ENCODE measurements at regions of chr6 and their contacts with region 1.

Region 1: DNA sequence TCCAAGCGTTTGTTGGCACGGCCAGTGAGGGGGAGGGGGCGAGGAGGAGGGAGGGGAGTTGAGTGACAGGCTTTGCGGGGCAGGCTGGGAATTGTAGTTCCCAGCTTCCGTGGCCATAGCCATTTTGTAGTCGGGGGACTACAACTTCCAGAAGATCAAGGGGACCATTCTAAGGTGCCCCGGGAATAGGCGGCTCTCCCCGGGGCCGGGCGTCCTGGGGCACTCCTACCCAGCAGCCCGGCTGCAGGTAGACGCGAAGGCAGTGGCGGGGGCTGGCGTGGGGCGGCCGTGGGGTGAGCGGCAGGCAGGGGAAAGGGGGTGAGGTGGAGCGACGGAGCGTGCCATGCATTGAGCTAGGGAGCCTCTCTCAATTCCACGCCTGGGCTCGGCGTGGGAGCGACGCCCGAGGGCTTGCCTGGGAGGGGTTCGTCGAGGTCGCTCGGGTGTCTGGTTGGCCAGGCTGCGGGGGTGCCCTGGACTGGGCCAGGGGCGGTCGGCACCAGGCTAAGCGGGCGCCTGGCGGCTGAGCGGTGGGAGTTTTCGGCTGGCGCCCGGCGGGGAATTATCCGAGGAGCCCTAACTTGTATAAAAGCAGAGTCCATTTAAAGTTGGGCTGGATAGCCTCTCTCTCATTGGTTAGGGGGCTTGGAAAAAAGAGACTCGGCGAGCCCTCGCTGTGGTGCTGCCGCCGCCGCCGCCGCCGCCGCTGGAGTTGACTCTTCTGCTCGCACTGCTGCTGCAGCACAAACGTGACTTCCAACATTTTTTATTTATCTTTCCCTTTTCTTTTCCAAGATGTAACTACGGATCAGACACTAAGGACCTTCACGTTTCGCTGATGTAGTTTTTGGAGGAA is at the start of gene JARID2:
- DNase-seq: peak; percentile 88 to 96
- ATAC-seq: peak; percentile 53 to 78 (median 62)
- H3K4me3 ChIP-seq: peak within 1 kb of the TSS; percentile 85
- H3K4me3 Mint-ChIP-seq: peak within 1 kb of the TSS; percentile 100
- H3K27ac ChIP-seq: peak within 1 kb of the TSS; percentile 88
- H3K27ac Mint-ChIP-seq: peak within 1 kb of the TSS; percentile 93 to 99
- H3K4me1 ChIP-seq: peaks cover 14% of the 10 kb centered on the region
- H3K4me1 Mint-ChIP-seq: peaks cover 39 to 41% of the 10 kb centered on the region in 2 donors
- H3K27me3 ChIP-seq: no peaks in the 10 kb centered on the region
- H3K27me3 Mint-ChIP-seq: no peaks in the 10 kb centered on the region
- CTCF ChIP-seq: no peak
- total RNA-seq, gene JARID2: 49.9 to 60.9 (median 60.5) TPM

Region 2: DNA sequence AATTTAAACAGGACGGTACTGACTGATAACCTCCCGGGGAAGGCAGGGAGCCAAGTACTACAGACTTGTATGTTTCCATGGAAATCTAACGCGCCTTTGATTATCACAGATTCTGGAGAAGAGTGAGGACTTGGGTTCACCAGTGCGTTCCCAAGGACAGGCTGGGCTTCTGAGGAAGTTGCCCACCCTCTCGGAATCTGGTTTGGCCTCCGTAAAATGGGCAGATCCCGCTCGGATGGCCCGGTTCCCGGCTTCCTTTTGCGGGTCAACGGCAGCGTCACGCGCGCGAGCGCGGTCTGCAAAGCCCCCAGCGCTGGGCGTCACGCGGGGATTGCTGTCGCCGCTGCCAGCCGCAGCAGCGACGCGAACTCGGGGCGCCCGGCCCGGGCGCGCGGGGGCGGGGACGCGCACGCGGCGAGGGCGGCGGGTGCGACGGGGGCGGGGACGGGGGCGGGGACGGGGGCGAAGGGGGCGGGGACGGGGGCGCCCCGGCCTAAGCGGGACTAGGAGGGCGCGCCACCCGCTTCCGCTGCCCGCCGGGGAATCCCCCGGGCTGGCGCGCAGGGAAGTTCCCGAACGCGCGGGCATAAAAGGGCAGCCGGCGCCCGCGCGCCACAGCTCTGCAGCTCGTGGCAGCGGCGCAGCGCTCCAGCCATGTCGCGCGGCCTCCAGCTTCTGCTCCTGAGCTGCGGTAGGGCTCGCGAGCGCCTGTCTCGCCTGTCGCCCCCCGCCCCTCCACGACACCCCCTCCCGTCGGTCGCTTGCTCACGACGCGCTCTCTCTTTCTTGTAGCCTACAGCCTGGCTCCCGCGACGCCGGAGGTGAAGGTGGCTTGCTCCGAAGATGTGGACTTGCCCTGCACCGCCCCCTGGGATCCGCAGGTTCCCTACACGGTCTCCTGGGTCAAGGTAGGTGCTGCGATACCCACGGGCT is 1128.2 kb before region 1 on chr6 and contains the start of gene CD83:
- intact Hi-C with region 1: loop called (anchors 5 kb)
- DNase-seq: peak; percentile 88 to 96
- ATAC-seq: peak; percentile 92 to 98 (median 93)
- H3K4me3 ChIP-seq: peak within 1 kb of the TSS; percentile 76
- H3K4me3 Mint-ChIP-seq: peak within 1 kb of the TSS; percentile 94
- H3K27ac ChIP-seq: peak within 1 kb of the TSS; percentile 92
- H3K27ac Mint-ChIP-seq: peak within 1 kb of the TSS; percentile 92 to 98
- H3K4me1 ChIP-seq: peaks cover 18% of the 10 kb centered on the region
- H3K4me1 Mint-ChIP-seq: peaks cover 20 to 25% of the 10 kb centered on the region in 2 donors
- H3K27me3 ChIP-seq: no peaks in the 10 kb centered on the region
- H3K27me3 Mint-ChIP-seq: peaks cover under 1 to 10% of the 10 kb centered on the region in 2 donors
- CTCF ChIP-seq: no peak
- total RNA-seq, gene CD83: 54.8 to 110 (median 64.3) TPM

Region 3: GRCh38 chr6:15137086-15137485 is 108.5 kb before region 1 on chr6:
- intact Hi-C with region 1: no loop called
- DNase-seq: no peak
- ATAC-seq: no peak
- H3K4me3 ChIP-seq: no peak overlapping the region
- H3K4me3 Mint-ChIP-seq: no peak overlapping the region
- H3K27ac ChIP-seq: no peak overlapping the region
- H3K27ac Mint-ChIP-seq: no peak overlapping the region
- H3K4me1 ChIP-seq: no peaks in the 10 kb centered on the region
- H3K4me1 Mint-ChIP-seq: no peaks in the 10 kb centered on the region
- H3K27me3 ChIP-seq: no peaks in the 10 kb centered on the region
- H3K27me3 Mint-ChIP-seq: no peaks in the 10 kb centered on the region
- CTCF ChIP-seq: no peak

Region 4: DNA sequence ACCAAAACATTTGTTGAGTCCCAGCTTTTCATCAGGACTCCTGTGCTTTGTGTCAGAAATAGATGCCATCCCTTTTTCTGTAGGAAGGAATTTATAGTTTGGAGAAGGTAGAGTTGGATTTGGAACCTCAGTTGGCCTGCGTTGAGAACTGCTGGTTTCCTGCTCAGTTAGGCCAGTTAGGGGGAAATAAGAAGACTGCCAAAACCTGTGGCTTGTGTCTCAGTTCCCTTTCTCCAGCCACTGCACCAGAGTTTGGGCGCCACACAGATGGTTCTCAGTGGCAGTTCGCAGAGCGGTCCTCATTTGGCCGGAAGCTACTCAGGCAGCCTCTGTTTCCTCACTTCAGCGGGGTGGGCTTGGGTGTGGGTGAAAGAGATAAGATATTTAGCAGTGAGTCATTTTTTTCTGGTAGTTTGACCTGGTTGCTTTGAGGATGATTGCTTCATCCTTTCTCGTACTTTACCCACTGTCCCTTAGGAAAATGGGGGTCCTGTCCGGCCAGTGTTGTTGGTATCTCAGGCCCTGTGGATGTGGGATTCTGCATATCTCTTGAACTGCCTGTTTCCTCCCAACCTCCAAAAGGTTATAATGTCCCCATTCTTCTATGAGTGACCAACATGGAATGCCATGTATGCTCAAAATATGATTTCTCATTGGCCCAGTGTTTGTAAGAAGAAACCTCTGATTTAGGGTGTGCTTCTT is 54.0 kb after region 1 on chr6:
- intact Hi-C with region 1: loop called (anchors 2 kb)
- DNase-seq: peak; percentile 56 to 65
- ATAC-seq: peak; percentile 84 to 94 (median 90)
- H3K4me3 ChIP-seq: no peak overlapping the region
- H3K4me3 Mint-ChIP-seq: peak overlapping the region; percentile 71
- H3K27ac ChIP-seq: peak overlapping the region; percentile 72
- H3K27ac Mint-ChIP-seq: peak overlapping the region; percentile 93 to 94
- H3K4me1 ChIP-seq: peaks cover 65% of the 10 kb centered on the region
- H3K4me1 Mint-ChIP-seq: peaks cover 76 to 80% of the 10 kb centered on the region in 2 donors
- H3K27me3 ChIP-seq: no peaks in the 10 kb centered on the region
- H3K27me3 Mint-ChIP-seq: no peaks in the 10 kb centered on the region
- CTCF ChIP-seq: no peak

Region 5: GRCh38 chr6:15420959-15421438 is 175.4 kb after region 1 on chr6:
- intact Hi-C with region 1: loop called (anchors 5 kb)
- DNase-seq: peak in 1 of 2 donors; percentile 38
- ATAC-seq: peak; percentile 44 to 60 (median 52)
- H3K4me3 ChIP-seq: no peak overlapping the region
- H3K4me3 Mint-ChIP-seq: peak overlapping the region; percentile 61
- H3K27ac ChIP-seq: peak overlapping the region; percentile 46
- H3K27ac Mint-ChIP-seq: peak overlapping the region; percentile 87 to 93
- H3K4me1 ChIP-seq: peaks cover 34% of the 10 kb centered on the region
- H3K4me1 Mint-ChIP-seq: peaks cover 68 to 79% of the 10 kb centered on the region in 2 donors
- H3K27me3 ChIP-seq: no peaks in the 10 kb centered on the region
- H3K27me3 Mint-ChIP-seq: no peaks in the 10 kb centered on the region
- CTCF ChIP-seq: no peak

Region 6: DNA sequence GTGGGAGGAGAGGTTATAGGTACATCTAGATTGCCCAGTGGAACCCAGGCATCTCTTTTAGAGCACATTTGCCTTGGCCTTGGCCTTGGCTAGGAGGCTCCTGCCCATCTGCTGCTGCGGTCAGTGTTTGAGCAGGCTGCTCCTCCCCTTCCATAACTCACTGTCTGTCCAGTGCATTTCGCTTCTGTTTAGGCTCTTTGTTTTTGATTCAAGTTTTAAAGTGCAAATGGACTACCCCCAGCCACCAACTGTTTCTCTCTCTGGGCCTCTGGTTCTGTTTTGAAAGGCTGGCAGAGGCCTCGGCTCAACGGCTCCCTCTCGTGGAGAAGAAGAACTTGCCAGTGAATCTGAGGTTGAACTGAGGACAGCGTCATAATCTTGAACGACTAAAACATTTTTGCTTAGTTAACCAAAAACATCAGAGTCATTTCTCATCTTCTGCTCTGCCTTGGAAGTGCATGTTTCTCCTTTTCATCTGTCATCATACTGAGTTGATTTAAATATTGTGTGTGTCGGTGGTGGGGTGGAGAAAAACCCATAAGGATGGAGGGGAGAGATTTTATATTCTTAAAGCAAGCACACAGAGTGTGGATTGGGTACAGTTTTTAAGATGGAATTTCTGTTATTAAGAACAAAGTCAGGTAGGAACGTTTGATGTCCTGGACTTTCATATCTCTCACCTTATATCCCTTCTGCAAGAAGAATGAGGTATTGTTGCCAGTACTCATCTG is 245.8 kb after region 1 on chr6:
- intact Hi-C with region 1: no loop called
- DNase-seq: peak; percentile 58 to 80
- ATAC-seq: peak; percentile 83 to 94 (median 84)
- H3K4me3 ChIP-seq: no peak overlapping the region
- H3K4me3 Mint-ChIP-seq: no peak overlapping the region
- H3K27ac ChIP-seq: no peak overlapping the region
- H3K27ac Mint-ChIP-seq: peak overlapping the region; percentile 53 to 75
- H3K4me1 ChIP-seq: peaks cover 18% of the 10 kb centered on the region
- H3K4me1 Mint-ChIP-seq: peaks cover 49 to 59% of the 10 kb centered on the region in 2 donors
- H3K27me3 ChIP-seq: no peaks in the 10 kb centered on the region
- H3K27me3 Mint-ChIP-seq: no peaks in the 10 kb centered on the region
- CTCF ChIP-seq: peak; percentile 83

Region 7: DNA sequence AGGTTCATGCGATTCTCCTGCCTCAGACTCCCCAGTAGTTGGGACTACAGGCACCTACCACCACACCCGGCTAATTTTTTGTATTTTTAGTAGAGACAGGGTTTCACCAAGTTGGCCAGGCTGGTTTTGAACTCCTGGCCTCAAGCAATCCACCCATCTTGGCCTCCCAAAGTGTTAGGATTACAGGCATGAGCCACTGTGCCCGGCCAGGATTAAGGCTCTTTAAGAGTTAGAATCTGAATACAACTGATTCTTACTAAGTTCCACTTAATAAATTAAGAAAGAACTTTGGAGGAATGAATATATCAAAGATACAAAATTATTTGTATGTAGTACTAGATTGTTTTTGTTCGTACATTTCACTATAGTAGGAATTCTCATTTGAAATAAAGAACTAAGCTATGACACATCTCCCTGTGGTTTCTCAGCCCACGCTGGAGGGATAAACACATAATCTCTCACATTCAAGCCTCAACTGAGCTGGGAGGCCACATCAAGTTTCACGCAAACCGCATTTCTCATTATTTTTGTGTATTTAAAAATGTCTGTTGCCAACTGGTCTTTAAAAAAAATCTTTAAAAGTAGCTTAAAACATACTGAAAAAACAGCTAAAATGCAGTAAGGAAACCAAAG is 383.0 kb after region 1 on chr6:
- intact Hi-C with region 1: loop called (anchors 5 kb)
- DNase-seq: peak; percentile 56 to 61
- ATAC-seq: peak; percentile 82 to 98 (median 86)
- H3K4me3 ChIP-seq: no peak overlapping the region
- H3K4me3 Mint-ChIP-seq: peak overlapping the region; percentile 78
- H3K27ac ChIP-seq: peak overlapping the region; percentile 71
- H3K27ac Mint-ChIP-seq: peak overlapping the region; percentile 62 to 89
- H3K4me1 ChIP-seq: peaks cover 11% of the 10 kb centered on the region
- H3K4me1 Mint-ChIP-seq: peaks cover 33 to 67% of the 10 kb centered on the region in 2 donors
- H3K27me3 ChIP-seq: no peaks in the 10 kb centered on the region
- H3K27me3 Mint-ChIP-seq: no peaks in the 10 kb centered on the region
- CTCF ChIP-seq: no peak

Measured in natural killer cell (primary cell).